ENCODE measurements at regions of chr20 and their contacts with region 1.

Region 1: GRCh38 chr20:59032023-59032712 is at the start of gene ATP5F1E:
- DNase-seq: peak; percentile 99
- H3K27ac ChIP-seq: peak within 1 kb of the TSS; percentile 85
- CTCF ChIP-seq: no peak

Region 2: GRCh38 chr20:59010995-59011873 is 20.9 kb before region 1 on chr20:
- CTCF ChIA-PET with region 1: interaction called, 5 read pairs
- POLR2A ChIA-PET with region 1: interaction called, 20 read pairs
- DNase-seq: peak; percentile 89
- H3K27ac ChIP-seq: peak overlapping the region; percentile 86
- CTCF ChIP-seq: no peak